Activated CD4-positive, alpha-beta T cell treated with anti-CD3 and anti-CD28 coated beads for 36 hours (primary cell): ENCODE measurements at regions of chr4 and their contacts with region 1.

Region 1: GRCh38 chr4:1351854-1352633 is 5.0 kb downstream of the UVSSA start:
- DNase-seq: peak; percentile 95
- ATAC-seq: peak; percentile 50
- H3K4me3 Mint-ChIP-seq: no peak overlapping the region
- H3K27ac Mint-ChIP-seq: peak overlapping the region; percentile 83
- H3K4me1 Mint-ChIP-seq: peaks cover 31% of the 10 kb centered on the region
- H3K27me3 Mint-ChIP-seq: no peaks in the 10 kb centered on the region

Region 2: DNA sequence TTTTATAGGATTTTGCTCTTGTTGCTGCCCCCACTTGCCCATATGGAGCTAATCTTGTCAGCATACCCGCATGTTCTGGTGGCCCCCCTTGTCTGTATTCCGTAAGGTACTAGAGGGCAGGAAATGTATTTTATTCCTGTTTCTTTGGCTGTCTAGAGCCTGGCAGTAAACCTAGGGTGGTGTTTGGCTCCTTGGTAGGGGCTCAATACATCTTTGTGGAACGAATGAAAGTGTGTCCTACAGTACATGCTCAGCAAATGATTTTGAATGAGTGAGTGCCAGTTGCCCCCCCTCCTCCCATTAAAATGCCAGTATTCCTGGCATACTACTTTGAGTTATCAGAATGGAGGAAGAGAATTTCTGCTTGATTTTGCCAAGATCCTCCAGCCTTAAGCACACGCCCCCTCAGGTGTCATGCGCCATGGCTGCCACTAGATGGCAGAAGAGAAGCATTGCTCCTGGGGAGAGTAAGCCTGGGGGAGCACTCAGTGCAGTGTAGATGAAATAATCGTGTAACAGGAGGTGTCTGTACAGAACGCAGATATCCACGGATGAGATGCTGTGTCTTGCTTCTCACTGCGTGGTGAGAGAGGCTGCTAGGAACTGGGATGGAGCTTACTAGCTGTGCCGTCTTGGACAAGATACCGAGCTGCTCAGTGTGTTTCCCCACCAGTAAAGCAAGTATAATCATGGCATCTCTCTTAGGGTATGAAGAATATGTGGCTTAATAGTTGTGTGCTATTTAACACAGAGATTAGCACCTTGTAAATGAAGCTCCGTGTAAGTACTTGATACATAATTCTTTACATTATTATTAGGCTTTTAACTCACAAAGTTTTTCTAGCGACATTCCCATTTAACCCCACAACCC is 221.5 kb before region 1 on chr4:
- CTCF ChIA-PET with region 1: interaction called, 9 read pairs
- POLR2A ChIA-PET with region 1: no interaction called
- intact Hi-C with region 1: loop called (anchors 1 kb)
- DNase-seq: peak; percentile 83
- ATAC-seq: peak; percentile 99
- H3K4me3 Mint-ChIP-seq: no peak overlapping the region
- H3K27ac Mint-ChIP-seq: no peak overlapping the region
- H3K4me1 Mint-ChIP-seq: no peaks in the 10 kb centered on the region
- H3K27me3 Mint-ChIP-seq: peaks cover 2% of the 10 kb centered on the region

Region 3: GRCh38 chr4:1277667-1278335 is 74.2 kb before region 1 on chr4:
- CTCF ChIA-PET with region 1: interaction called, 4 read pairs
- POLR2A ChIA-PET with region 1: interaction called, 3 read pairs
- intact Hi-C with region 1: loop called in 1 of 2 experiments (anchors 1 kb)
- DNase-seq: no peak
- ATAC-seq: peak; percentile 19
- H3K4me3 Mint-ChIP-seq: no peak overlapping the region
- H3K27ac Mint-ChIP-seq: no peak overlapping the region
- H3K4me1 Mint-ChIP-seq: no peaks in the 10 kb centered on the region
- H3K27me3 Mint-ChIP-seq: no peaks in the 10 kb centered on the region

Region 4: GRCh38 chr4:1307951-1308735 is 43.9 kb before region 1 on chr4:
- CTCF ChIA-PET with region 1: no interaction called
- POLR2A ChIA-PET with region 1: no interaction called
- intact Hi-C with region 1: no loop called
- DNase-seq: no peak
- ATAC-seq: no peak
- H3K4me3 Mint-ChIP-seq: no peak overlapping the region
- H3K27ac Mint-ChIP-seq: peak overlapping the region; percentile 21
- H3K4me1 Mint-ChIP-seq: peaks cover 56% of the 10 kb centered on the region
- H3K27me3 Mint-ChIP-seq: no peaks in the 10 kb centered on the region

Region 5: GRCh38 chr4:1318488-1319213 is 33.4 kb before region 1 on chr4:
- CTCF ChIA-PET with region 1: interaction called, 3 read pairs
- POLR2A ChIA-PET with region 1: no interaction called
- intact Hi-C with region 1: loop called in 1 of 2 experiments (anchors 2 kb)
- DNase-seq: peak; percentile 51
- ATAC-seq: no peak
- H3K4me3 Mint-ChIP-seq: no peak overlapping the region
- H3K27ac Mint-ChIP-seq: no peak overlapping the region
- H3K4me1 Mint-ChIP-seq: peaks cover 17% of the 10 kb centered on the region
- H3K27me3 Mint-ChIP-seq: no peaks in the 10 kb centered on the region

Region 6: DNA sequence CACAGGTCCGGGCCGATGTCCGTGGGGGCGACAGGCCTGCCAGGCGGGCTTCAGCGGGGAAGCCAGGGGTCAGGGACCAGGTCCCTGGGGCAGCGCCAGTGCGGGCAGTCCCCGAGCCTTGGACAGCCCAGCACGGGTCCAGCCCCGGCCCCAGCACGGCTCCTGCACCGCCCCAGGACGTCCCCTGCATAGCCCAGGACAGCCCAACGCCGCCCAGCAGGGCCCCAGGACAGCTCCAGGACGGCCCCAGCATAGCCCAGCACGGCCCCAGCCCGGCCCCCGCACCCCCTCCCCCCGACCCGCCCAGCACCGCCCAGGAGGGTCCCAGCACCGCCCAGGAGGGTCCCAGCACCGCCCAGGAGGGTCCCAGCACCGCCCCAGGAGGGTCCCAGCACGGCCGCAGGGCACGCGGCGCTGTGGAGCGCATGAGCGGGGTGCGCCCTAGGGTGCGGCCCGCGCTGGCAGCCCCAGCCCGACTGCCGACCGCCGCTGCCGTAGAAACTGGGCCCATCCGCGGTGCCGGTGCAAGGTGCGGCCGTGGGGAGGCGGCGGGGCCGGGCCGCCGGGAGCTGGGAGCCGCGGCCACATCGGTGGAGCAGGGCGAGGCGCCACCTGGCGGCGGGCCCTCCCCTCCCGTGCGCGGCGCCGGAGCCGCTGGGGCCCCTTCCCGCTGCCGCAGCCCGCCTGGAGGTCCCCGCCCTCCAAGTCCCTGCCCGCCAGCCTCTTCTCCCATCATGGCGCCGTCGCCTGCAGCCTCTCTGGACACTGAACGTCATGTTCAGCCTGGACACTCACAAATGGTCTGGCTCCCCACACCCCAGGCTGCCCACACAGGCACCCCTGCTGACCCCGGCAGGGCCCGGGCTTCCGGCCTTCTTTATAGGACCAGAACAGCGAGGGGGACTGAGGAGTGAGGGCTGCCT is 161.0 kb after region 1 on chr4:
- CTCF ChIA-PET with region 1: interaction called, 3 read pairs
- POLR2A ChIA-PET with region 1: no interaction called
- intact Hi-C with region 1: loop called in 1 of 2 experiments (anchors 1 kb)
- DNase-seq: peak; percentile 75
- ATAC-seq: peak; percentile 68
- H3K4me3 Mint-ChIP-seq: no peak overlapping the region
- H3K27ac Mint-ChIP-seq: no peak overlapping the region
- H3K4me1 Mint-ChIP-seq: no peaks in the 10 kb centered on the region
- H3K27me3 Mint-ChIP-seq: peaks cover 7% of the 10 kb centered on the region

Region 7: GRCh38 chr4:1628892-1629698 is 277.1 kb after region 1 on chr4:
- CTCF ChIA-PET with region 1: interaction called, 4 read pairs
- POLR2A ChIA-PET with region 1: no interaction called
- intact Hi-C with region 1: loop called (anchors 1 to 5 kb)
- DNase-seq: peak; percentile 82
- ATAC-seq: peak; percentile 90
- H3K4me3 Mint-ChIP-seq: no peak overlapping the region
- H3K27ac Mint-ChIP-seq: no peak overlapping the region
- H3K4me1 Mint-ChIP-seq: no peaks in the 10 kb centered on the region
- H3K27me3 Mint-ChIP-seq: no peaks in the 10 kb centered on the region

Region 8: GRCh38 chr4:1654216-1654955 is 302.3 kb after region 1 on chr4:
- CTCF ChIA-PET with region 1: no interaction called
- POLR2A ChIA-PET with region 1: no interaction called
- intact Hi-C with region 1: no loop called
- DNase-seq: no peak
- ATAC-seq: no peak
- H3K4me3 Mint-ChIP-seq: no peak overlapping the region
- H3K27ac Mint-ChIP-seq: no peak overlapping the region
- H3K4me1 Mint-ChIP-seq: no peaks in the 10 kb centered on the region
- H3K27me3 Mint-ChIP-seq: no peaks in the 10 kb centered on the region